B cell (primary cell): ENCODE measurements at regions of chr6 and their contacts with region 1.

Region 1: GRCh38 chr6:27893059-27893835 is 18.9 kb downstream of the OR2B2 start:
- DNase-seq: peak; percentile 97
- ATAC-seq: peak; percentile 67
- H3K4me3 ChIP-seq: peak overlapping the region; percentile 68 to 100 (median 88)
- H3K4me3 Mint-ChIP-seq: no peak overlapping the region
- H3K27ac ChIP-seq: peak overlapping the region; percentile 76 to 77
- H3K27ac Mint-ChIP-seq: no peak overlapping the region
- H3K4me1 ChIP-seq: peaks cover 18 to 38% of the 10 kb centered on the region in 2 donors
- H3K4me1 Mint-ChIP-seq: peaks cover 36% of the 10 kb centered on the region
- H3K27me3 ChIP-seq: no peaks in the 10 kb centered on the region
- H3K27me3 Mint-ChIP-seq: no peaks in the 10 kb centered on the region
- CTCF ChIP-seq: no peak

Region 2: DNA sequence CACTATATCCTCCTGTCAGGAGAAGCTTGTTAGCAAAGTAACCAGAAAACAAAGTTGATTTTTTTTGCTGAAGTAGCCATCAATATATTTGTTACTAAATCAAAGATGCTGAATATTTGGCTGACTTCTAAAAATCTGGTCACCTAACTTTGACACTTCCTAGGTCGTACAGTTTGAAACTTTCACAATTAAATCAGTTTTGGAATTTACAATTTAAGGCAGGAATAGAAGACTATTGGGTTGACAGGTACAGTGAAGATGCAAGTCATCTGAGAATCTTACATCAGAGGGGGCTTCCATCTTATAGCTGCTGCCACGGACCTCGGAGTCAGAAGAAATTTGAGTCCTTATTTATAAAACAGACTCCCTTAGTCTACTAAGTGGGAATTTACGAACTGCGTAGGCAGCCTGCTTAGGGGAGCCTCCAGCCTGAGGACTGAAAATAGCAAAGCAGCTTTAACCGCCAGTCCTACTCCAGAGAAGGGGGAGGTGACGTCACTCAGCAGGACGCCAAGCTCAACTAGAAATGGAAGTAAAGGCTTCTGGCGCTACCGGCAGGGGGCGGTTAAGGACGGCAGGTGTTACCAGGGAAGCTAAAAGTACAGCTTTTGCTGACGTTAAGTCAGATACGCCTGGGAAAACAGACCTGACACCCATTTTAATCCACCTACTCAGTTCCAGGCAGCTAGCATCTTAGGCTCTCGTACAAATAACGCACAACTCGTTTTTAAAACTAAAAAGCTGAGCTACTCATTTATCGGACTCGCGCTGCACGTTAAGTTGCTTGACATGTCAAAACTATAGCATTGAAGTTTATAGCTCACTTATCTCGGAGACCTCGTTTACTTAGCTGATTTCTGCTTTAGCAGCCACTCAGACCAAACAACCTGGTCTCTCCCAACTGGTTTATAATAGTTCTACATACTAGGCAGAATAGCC is 1867.1 kb before region 1 on chr6:
- CTCF ChIA-PET with region 1: interaction called, 7 read pairs
- POLR2A ChIA-PET with region 1: interaction called, 15 read pairs
- intact Hi-C with region 1: loop called (anchors 5 kb)
- DNase-seq: peak; percentile 97
- ATAC-seq: peak; percentile 35
- H3K4me3 ChIP-seq: peak overlapping the region; percentile 58 to 99 (median 88)
- H3K4me3 Mint-ChIP-seq: peak overlapping the region; percentile 98
- H3K27ac ChIP-seq: peak overlapping the region; percentile 88 to 97
- H3K27ac Mint-ChIP-seq: peak overlapping the region; percentile 98
- H3K4me1 ChIP-seq: peaks cover 23 to 32% of the 10 kb centered on the region in 2 donors
- H3K4me1 Mint-ChIP-seq: peaks cover 49% of the 10 kb centered on the region
- H3K27me3 ChIP-seq: no peaks in the 10 kb centered on the region
- H3K27me3 Mint-ChIP-seq: no peaks in the 10 kb centered on the region
- CTCF ChIP-seq: peak; percentile 92

Region 3: DNA sequence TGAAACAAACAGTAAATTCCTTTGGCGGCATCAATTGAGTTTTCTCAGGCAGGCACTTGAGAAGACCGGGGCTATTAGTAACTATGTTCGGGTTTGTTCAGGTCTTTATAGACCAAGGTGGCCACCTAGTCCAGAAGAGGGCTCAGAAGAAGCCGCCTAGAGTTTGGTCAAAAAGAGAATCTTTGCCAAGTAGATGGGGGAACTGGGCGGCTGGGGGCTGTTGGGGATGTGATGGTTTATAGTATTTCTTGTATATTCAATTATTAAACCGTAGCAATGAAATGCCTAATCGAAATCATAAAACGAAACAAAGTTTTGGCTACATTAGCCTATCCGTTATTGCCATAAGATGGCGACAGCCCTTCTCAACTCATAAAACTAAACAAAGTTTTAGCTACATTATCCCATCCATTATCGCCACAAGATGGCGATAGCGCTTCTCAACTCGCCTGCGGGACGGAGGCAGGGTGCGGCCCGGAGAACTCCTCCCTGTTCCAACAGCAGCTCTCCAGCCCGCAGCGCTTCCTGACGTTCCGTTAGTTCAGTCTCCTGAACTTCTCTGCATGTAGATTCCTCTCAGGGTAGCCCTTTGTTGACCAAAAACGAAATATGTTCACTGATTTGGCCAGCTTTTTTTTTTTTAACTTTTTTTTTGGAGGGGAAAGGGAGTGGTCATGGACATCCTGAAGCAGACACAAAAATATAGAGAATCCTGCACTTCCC is 766.3 kb before region 1 on chr6:
- CTCF ChIA-PET with region 1: interaction called, 28 read pairs
- POLR2A ChIA-PET with region 1: interaction called, 45 read pairs
- intact Hi-C with region 1: loop called (anchors 1 kb)
- DNase-seq: peak; percentile 93
- ATAC-seq: peak; percentile 76
- H3K4me3 ChIP-seq: peak overlapping the region; percentile 5 to 56 (median 40)
- H3K4me3 Mint-ChIP-seq: peak overlapping the region; percentile 87
- H3K27ac ChIP-seq: peak overlapping the region in 1 of 2 donors; percentile 56
- H3K27ac Mint-ChIP-seq: peak overlapping the region; percentile 85
- H3K4me1 ChIP-seq: peaks cover 13 to 18% of the 10 kb centered on the region in 2 donors
- H3K4me1 Mint-ChIP-seq: peaks cover 20% of the 10 kb centered on the region
- H3K27me3 ChIP-seq: no peaks in the 10 kb centered on the region
- H3K27me3 Mint-ChIP-seq: no peaks in the 10 kb centered on the region
- CTCF ChIP-seq: peak; percentile 92

Region 4: DNA sequence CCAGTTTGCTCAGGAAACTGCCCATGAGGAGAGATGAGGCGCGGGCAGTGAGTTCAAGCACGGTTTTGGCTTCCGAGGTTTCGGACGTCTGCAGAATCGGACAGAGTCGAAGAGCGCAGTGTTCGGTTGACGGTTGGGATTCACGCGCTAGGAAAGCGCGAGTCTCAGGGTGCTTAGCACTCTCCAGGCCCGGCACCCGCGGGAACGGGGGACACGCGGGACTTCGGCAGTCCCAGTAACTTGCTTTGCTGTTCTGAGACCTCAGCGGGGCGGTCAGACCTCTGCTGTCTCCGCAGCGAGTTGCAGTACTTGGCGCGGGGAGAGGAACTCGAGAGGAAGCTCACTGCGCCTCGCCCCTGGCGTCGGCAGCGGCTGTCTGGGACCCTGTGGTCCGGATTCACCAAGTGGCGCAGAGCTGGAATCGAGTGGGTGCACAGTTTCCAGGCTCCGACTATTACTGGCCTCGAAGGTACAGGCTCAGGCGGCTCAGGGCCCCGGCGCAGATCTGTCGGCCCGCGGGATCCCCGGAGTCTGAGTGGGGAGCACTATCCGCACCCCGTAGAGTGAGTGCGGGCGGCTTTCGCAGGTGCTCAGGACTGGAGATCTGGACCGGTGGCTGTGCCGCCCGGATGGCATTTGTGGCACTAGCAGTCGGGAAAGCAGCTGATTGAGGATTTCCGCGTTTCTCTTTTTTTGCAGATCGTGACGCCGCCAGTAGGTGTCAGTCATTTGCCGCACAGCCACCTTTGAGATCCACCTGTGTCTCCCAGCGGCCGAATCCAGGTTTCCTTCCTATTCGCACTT is 580.9 kb before region 1 on chr6 and contains the start of gene POM121L2:
- CTCF ChIA-PET with region 1: interaction called, 11 read pairs
- POLR2A ChIA-PET with region 1: no interaction called
- intact Hi-C with region 1: loop called (anchors 5 kb)
- DNase-seq: peak; percentile 82
- ATAC-seq: peak; percentile 60
- H3K4me3 ChIP-seq: peak within 1 kb of the TSS; percentile 5 to 69 (median 62)
- H3K4me3 Mint-ChIP-seq: peak within 1 kb of the TSS; percentile 88
- H3K27ac ChIP-seq: no peak within 1 kb of the TSS
- H3K27ac Mint-ChIP-seq: no peak within 1 kb of the TSS
- H3K4me1 ChIP-seq: peaks cover 12 to 13% of the 10 kb centered on the region in 2 donors
- H3K4me1 Mint-ChIP-seq: peaks cover 13% of the 10 kb centered on the region
- H3K27me3 ChIP-seq: peaks cover 0 to 56% (median 38%) of the 10 kb centered on the region in 4 experiments
- H3K27me3 Mint-ChIP-seq: peaks cover 70% of the 10 kb centered on the region
- CTCF ChIP-seq: peak; percentile 82
- total RNA-seq, gene POM121L2: not detected in 2 replicates

Region 5: GRCh38 chr6:27687154-27688013 is 205.9 kb before region 1 on chr6:
- CTCF ChIA-PET with region 1: interaction called, 8 read pairs
- POLR2A ChIA-PET with region 1: no interaction called
- intact Hi-C with region 1: loop called (anchors 2 kb)
- DNase-seq: peak; percentile 87
- ATAC-seq: peak; percentile 73
- H3K4me3 ChIP-seq: peak overlapping the region; percentile 27 to 99 (median 77)
- H3K4me3 Mint-ChIP-seq: peak overlapping the region; percentile 93
- H3K27ac ChIP-seq: peak overlapping the region in 1 of 2 donors; percentile 32
- H3K27ac Mint-ChIP-seq: peak overlapping the region; percentile 91
- H3K4me1 ChIP-seq: peaks cover 7 to 15% of the 10 kb centered on the region in 2 donors
- H3K4me1 Mint-ChIP-seq: peaks cover 16% of the 10 kb centered on the region
- H3K27me3 ChIP-seq: peaks cover 0 to 8% (median 2%) of the 10 kb centered on the region in 4 experiments
- H3K27me3 Mint-ChIP-seq: peaks cover 4% of the 10 kb centered on the region
- CTCF ChIP-seq: peak; percentile 69

Region 6: GRCh38 chr6:27825025-27825793 is 68.0 kb before region 1 on chr6:
- CTCF ChIA-PET with region 1: interaction called, 41 read pairs
- POLR2A ChIA-PET with region 1: interaction called, 32 read pairs
- intact Hi-C with region 1: no loop called
- DNase-seq: peak; percentile 41
- ATAC-seq: no peak
- H3K4me3 ChIP-seq: peak overlapping the region; percentile 66 to 95 (median 88)
- H3K4me3 Mint-ChIP-seq: peak overlapping the region; percentile 95
- H3K27ac ChIP-seq: peak overlapping the region; percentile 79 to 90
- H3K27ac Mint-ChIP-seq: peak overlapping the region; percentile 97
- H3K4me1 ChIP-seq: peaks cover 16 to 20% of the 10 kb centered on the region in 2 donors
- H3K4me1 Mint-ChIP-seq: peaks cover 35% of the 10 kb centered on the region
- H3K27me3 ChIP-seq: no peaks in the 10 kb centered on the region
- H3K27me3 Mint-ChIP-seq: no peaks in the 10 kb centered on the region
- CTCF ChIP-seq: no peak

Region 7: GRCh38 chr6:28355743-28356665 is 462.8 kb after region 1 on chr6:
- CTCF ChIA-PET with region 1: interaction called, 6 read pairs
- POLR2A ChIA-PET with region 1: interaction called, 5 read pairs
- intact Hi-C with region 1: loop called (anchors 2 kb)
- DNase-seq: peak; percentile 81
- ATAC-seq: peak; percentile 87
- H3K4me3 ChIP-seq: peak overlapping the region; percentile 48 to 70 (median 61)
- H3K4me3 Mint-ChIP-seq: peak overlapping the region; percentile 99
- H3K27ac ChIP-seq: no peak overlapping the region
- H3K27ac Mint-ChIP-seq: peak overlapping the region; percentile 87
- H3K4me1 ChIP-seq: peaks cover 2 to 17% of the 10 kb centered on the region in 2 donors
- H3K4me1 Mint-ChIP-seq: peaks cover 18% of the 10 kb centered on the region
- H3K27me3 ChIP-seq: no peaks in the 10 kb centered on the region
- H3K27me3 Mint-ChIP-seq: no peaks in the 10 kb centered on the region
- CTCF ChIP-seq: peak; percentile 84